ENCODE measurements at regions of chr3 and their contacts with region 1.

Region 1: DNA sequence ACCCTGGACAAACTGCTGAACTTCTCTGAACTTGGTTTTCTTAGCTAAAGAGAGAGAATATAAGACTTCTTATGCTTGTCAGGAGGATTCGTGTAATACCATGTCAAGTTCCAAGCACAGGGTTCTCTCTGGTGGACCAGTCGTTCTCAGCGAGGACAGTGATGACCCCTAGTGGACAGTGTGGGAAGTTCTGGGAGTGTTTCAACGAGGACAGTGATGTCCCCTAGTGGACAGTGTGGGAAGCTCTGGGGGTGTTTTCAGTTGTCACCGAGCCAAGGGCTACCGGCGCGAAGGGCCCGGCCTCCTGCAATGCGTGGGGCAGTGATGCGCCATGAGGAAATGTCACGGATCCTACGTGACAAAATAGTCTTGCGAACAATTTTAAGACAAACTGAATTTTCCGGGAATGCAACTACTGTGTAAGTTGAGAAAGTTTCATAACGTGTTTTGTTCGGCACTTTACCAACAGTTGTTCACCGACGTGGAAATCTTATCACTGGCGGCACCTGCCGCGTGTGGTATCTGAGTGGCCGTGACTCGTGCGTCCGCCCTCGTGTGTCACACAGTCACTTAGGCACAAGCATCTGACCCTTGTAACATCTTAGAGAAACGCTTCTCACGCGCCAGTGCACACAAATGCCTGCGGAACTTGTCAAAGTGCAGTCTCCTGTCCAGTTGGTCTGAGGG is 39.3 kb upstream of the MUC4 start:
- DNase-seq: peak; percentile 94
- H3K4me3 ChIP-seq: peak overlapping the region in 1 of 2 experiments; percentile 46; a peak in 1 of 4 replicates
- H3K27ac ChIP-seq: no peak overlapping the region
- H3K4me1 ChIP-seq: no peaks in the 10 kb centered on the region; a peak in 1 of 4 replicates
- H3K27me3 ChIP-seq: no peaks in the 10 kb centered on the region
- CTCF ChIP-seq: peak; percentile 100
- EP300 ChIP-seq: no peak
- RAD21 ChIP-seq: peak; percentile 99

Region 2: GRCh38 chr3:195828762-195829161 is 22.2 kb before region 1 on chr3:
- CTCF ChIA-PET with region 1: interaction called, 15 read pairs
- POLR2A ChIA-PET with region 1: no interaction called
- DNase-seq: peak; percentile 65
- H3K4me3 ChIP-seq: no peak overlapping the region
- H3K27ac ChIP-seq: no peak overlapping the region
- H3K4me1 ChIP-seq: no peaks in the 10 kb centered on the region
- H3K27me3 ChIP-seq: no peaks in the 10 kb centered on the region
- CTCF ChIP-seq: no peak
- EP300 ChIP-seq: no peak
- RAD21 ChIP-seq: no peak

Region 3: GRCh38 chr3:195863121-195864006 is 12.4 kb after region 1 on chr3:
- CTCF ChIA-PET with region 1: interaction called, 42 read pairs
- POLR2A ChIA-PET with region 1: no interaction called
- DNase-seq: peak; percentile 94
- H3K4me3 ChIP-seq: no peak overlapping the region; a peak in 1 of 4 replicates
- H3K27ac ChIP-seq: peak overlapping the region in 1 of 2 experiments; percentile 1; a peak in 2 of 4 replicates
- H3K4me1 ChIP-seq: peaks cover 0 to 6% of the 10 kb centered on the region in 2 experiments; a peak in 1 of 4 replicates
- H3K27me3 ChIP-seq: no peaks in the 10 kb centered on the region
- CTCF ChIP-seq: peak; percentile 89
- EP300 ChIP-seq: no peak
- RAD21 ChIP-seq: peak; percentile 87

Region 4: GRCh38 chr3:195894780-195895607 is 44.0 kb after region 1 on chr3:
- CTCF ChIA-PET with region 1: interaction called, 606 read pairs
- POLR2A ChIA-PET with region 1: no interaction called
- DNase-seq: peak; percentile 84
- H3K4me3 ChIP-seq: peak overlapping the region; percentile 80 to 99
- H3K27ac ChIP-seq: peak overlapping the region; percentile 81 to 92
- H3K4me1 ChIP-seq: peaks cover 41 to 59% of the 10 kb centered on the region in 2 experiments; a peak in 3 of 4 replicates
- H3K27me3 ChIP-seq: no peaks in the 10 kb centered on the region
- CTCF ChIP-seq: peak; percentile 95
- EP300 ChIP-seq: no peak; a peak in 1 of 4 replicates
- RAD21 ChIP-seq: peak; percentile 88